Left cardiac atrium (tissue), 4 donors: ENCODE measurements at regions of chr18 and their contacts with region 1.

Region 1: DNA sequence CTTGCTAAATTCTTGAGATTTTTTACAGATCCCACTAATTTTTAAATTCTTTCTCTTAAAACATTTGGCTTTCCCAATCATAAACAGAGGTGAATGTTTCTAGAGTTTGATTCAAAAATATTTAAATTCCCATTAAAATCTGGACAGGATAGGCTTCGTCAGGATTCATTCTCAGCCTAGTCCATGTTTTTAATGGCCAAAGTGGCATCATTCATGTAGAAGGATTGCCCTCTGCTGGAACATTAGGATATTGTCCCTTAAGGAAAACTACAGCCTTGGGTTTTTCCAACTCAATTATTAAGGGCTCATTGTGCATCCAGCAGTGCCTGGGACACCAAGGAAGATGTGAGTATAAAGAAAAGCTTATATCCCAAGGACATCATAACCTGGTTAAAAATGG is 71.7 kb downstream of the TPGS2 start:
- DNase-seq: no peak
- ATAC-seq: peak; percentile 75

Region 2: DNA sequence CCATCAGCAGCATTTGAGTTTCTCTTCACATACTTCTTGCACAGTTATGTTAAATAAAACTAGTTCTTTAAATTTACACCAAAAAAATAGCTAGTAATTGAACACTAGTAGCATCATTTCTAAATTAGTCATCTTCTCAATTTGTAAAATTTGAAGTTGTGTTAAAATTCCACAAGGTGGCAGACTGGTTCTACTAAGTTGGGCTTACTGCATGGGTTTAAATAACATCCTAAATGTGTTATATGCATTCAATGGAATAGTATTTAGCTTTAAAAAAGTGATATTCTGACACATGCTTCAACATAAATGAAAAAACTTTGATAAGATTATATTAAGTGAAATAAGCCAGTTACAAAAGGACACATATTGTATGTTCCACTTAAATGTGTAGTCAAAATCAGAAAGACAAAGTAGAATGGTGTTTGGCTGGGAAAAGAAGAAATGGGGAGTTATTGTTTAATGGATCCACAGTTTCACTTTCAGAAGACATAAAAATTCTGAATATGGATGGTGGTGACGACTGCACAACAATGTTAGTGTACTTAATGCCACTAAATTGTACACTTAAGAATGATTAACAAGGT is 661.1 kb before region 1 on chr18:
- intact Hi-C with region 1: loop called in 1 of 2 experiments (anchors 10 kb)
- DNase-seq: no peak
- ATAC-seq: no peak

Region 3: GRCh38 chr18:36688020-36688965 is 68.8 kb before region 1 on chr18:
- intact Hi-C with region 1: loop called (anchors 2 to 5 kb)
- DNase-seq: peak; percentile 50
- ATAC-seq: peak; percentile 61 to 63

Region 4: DNA sequence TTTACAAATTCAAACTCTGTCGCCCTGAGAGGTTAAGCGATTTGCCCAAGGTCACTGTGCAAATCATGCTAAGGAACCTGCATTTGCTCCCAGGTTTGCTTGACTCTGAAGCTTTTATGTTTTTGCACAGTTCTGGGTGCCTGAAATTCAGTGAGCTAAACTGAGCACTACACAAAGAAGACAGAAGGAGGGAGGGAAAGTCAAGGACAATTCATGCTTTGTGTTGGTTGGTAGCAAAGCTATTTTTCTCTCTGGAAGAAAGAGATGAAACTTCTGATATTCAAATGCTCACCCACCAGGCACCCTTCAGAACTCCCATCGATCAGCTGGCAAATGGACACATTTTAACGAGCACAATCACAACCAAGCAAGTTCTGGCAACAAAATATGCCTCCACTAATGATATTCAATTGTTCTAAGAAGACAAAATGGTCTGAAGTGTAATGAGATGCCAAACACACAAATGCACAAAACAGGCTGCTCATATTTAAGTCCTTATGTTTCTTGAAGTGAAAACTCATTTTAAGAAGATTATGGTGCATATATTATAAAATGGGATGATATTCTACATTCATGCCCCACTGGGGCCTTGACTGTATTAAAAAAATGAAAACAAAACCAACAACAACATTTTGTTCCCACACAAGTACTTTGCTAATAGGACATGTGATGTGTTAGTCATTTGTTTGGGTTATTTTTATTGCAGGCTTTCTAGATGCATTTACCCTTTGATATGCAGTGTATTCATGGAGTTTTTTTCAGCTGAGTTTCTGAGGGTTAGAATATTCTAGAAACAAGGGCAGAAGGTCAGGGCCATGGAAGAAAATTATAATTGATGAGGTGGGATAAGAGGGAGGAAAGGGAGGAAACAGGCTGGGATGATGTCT is 1254.1 kb after region 1 on chr18:
- intact Hi-C with region 1: no loop called
- DNase-seq: no peak
- ATAC-seq: no peak